ENCODE measurements at regions of chr12 and their contacts with region 1.

Region 1: GRCh38 chr12:49288412-49288853 is 6.5 kb upstream of the PRPH start:
- DNase-seq: peak; percentile 60
- H3K4me3 Mint-ChIP-seq: no peak overlapping the region
- H3K27ac Mint-ChIP-seq: no peak overlapping the region
- H3K4me1 Mint-ChIP-seq: peaks cover 5% of the 10 kb centered on the region
- H3K27me3 Mint-ChIP-seq: peaks cover 34% of the 10 kb centered on the region

Region 2: DNA sequence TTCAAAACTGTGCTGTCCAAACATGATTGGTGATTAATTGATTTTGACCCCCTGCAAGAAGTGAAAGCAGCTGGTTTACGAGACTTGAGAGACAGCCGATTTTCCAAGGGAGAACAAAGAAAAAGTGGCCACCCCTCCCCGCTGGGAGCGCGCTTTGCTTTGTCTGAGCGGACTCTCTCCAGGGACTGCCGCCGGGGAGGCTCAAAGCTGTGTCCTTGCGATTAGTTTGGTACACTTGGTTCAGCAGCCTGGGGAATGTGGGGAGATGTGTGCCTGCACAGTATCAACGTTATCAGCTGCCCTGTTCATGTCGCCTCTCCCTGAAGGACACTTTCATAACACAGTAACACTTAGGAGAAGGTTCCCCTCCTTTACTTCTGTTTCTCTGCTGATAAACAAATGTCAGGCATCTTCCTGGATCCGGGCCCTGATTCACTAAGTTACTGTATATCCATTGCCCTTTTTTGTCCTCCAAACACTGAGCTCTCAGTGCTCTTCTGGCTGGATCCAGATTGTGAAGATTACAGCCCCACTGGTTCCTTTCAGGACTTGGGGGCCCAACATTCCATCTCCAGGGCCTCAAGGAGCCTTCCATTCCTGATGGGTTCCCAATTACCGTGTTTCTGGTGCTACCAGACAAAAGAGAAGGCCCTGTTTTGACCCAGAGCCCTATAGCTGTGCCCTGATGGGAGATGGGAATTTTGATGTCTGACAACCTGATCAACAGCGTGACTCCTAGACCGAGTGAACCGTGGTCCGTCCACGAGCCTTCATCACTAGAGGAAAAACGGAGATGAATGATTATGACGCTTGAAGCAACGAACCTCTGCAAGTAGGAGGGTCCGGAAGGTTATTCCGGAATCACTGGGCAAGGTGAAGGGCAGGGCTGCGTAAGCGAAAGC is 55.2 kb before region 1 on chr12:
- intact Hi-C with region 1: no loop called
- DNase-seq: no peak
- H3K4me3 Mint-ChIP-seq: peak overlapping the region; percentile 67
- H3K27ac Mint-ChIP-seq: peak overlapping the region; percentile 73
- H3K4me1 Mint-ChIP-seq: peaks cover 9% of the 10 kb centered on the region
- H3K27me3 Mint-ChIP-seq: peaks cover 13% of the 10 kb centered on the region

Region 3: GRCh38 chr12:49336645-49337584 is 48.5 kb after region 1 on chr12 and contains the start of gene C1QL4:
- intact Hi-C with region 1: loop called (anchors 1 kb)
- DNase-seq: peak; percentile 83
- H3K4me3 Mint-ChIP-seq: peak within 1 kb of the TSS; percentile 63
- H3K27ac Mint-ChIP-seq: peak within 1 kb of the TSS; percentile 52
- H3K4me1 Mint-ChIP-seq: peaks cover 21% of the 10 kb centered on the region
- H3K27me3 Mint-ChIP-seq: peaks cover 76% of the 10 kb centered on the region
- total RNA-seq, gene C1QL4: not detected in 2 replicates

Region 4: GRCh38 chr12:49342066-49342913 is 53.9 kb after region 1 on chr12:
- intact Hi-C with region 1: loop called (anchors 1 kb)
- DNase-seq: peak; percentile 56
- H3K4me3 Mint-ChIP-seq: peak overlapping the region; percentile 37
- H3K27ac Mint-ChIP-seq: no peak overlapping the region
- H3K4me1 Mint-ChIP-seq: peaks cover 35% of the 10 kb centered on the region
- H3K27me3 Mint-ChIP-seq: peaks cover 77% of the 10 kb centered on the region

Region 5: GRCh38 chr12:49347384-49348237 is 59.2 kb after region 1 on chr12:
- intact Hi-C with region 1: loop called (anchors 1 kb)
- DNase-seq: peak; percentile 69
- H3K4me3 Mint-ChIP-seq: peak overlapping the region; percentile 79
- H3K27ac Mint-ChIP-seq: no peak overlapping the region
- H3K4me1 Mint-ChIP-seq: peaks cover 24% of the 10 kb centered on the region
- H3K27me3 Mint-ChIP-seq: peaks cover 64% of the 10 kb centered on the region

Region 6: DNA sequence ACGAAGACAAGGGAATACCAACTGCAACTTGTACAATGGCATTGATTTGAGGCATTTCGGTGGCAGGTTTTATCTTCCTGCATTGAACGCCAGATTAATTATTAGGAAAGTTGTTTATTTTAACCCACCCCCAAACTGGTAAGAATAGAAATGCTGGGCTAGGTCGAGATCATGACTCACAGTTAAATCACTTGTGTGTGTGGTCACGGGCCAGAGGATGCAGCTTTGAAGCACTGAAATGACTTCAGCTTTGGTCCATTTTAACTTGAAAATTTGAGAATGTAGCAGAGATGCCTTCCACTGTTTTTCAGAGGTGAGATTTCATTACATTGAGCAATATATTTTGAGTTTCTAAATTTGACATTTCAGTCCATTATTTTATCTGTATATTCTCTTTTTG is 226.8 kb after region 1 on chr12:
- intact Hi-C with region 1: loop called (anchors 1 kb)
- DNase-seq: no peak
- H3K4me3 Mint-ChIP-seq: no peak overlapping the region
- H3K27ac Mint-ChIP-seq: no peak overlapping the region
- H3K4me1 Mint-ChIP-seq: peaks cover 9% of the 10 kb centered on the region
- H3K27me3 Mint-ChIP-seq: no peaks in the 10 kb centered on the region